ENCODE measurements at regions of chr12 and their contacts with region 1.

Region 1: GRCh38 chr12:57865090-57865751 is 18.7 kb upstream of the CTDSP2 start:
- DNase-seq: peak; percentile 77
- ATAC-seq: peak; percentile 90
- H3K4me3 ChIP-seq: peak overlapping the region; percentile 41
- H3K27ac ChIP-seq: peak overlapping the region; percentile 98
- H3K4me1 ChIP-seq: peaks cover 27% of the 10 kb centered on the region
- H3K27me3 ChIP-seq: no peaks in the 10 kb centered on the region
- CTCF ChIP-seq: no peak
- POLR2A ChIP-seq: no peak
- RAD21 ChIP-seq: no peak

Region 2: DNA sequence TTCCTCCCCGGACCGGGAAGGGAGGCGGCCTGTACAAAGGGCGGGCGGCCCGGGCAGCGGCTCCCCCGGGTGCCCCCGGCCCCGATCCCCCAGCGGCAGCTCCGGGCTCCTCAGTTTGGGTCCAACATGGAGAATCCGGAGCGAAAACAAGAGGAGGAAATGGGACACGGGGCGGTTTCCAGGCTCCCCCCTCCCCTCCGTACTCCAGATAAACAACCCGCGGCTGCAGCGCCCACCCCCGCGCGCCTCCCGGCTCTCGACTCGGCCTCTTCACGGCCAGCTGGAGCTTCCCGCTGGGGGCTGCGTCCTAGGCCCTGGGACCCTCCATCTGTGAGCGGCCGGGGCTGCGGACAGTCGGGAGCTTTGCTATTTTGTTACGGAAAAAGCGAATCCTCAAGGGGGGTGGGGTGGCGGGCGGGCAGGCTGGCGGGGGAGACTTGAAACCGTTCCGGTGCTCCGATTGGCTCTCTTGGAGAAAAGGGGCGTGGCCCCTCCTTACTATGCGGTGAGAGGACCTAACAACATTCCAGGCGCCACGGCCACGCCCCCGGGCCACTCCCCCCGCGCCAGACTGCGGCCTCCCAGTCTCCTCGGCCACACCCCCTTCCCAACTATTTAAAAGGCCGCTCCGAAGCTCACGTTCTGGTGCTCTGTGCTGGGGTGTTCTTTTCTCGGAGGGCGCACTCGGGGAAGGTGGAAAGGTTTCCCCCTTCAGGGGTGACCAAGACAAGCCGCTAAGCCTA is 18.5 kb before region 1 on chr12 and contains the start of gene CTDSP2:
- CTCF ChIA-PET with region 1: interaction called, 4 read pairs
- POLR2A ChIA-PET with region 1: interaction called, 12 read pairs
- dilution Hi-C with region 1: no loop called
- in situ Hi-C with region 1: no loop called
- intact Hi-C with region 1: loop called (anchors 2 kb)
- DNase-seq: peak; percentile 98
- ATAC-seq: peak; percentile 81
- H3K4me3 ChIP-seq: peak within 1 kb of the TSS; percentile 99
- H3K27ac ChIP-seq: peak within 1 kb of the TSS; percentile 99
- H3K4me1 ChIP-seq: peaks cover 16% of the 10 kb centered on the region
- H3K27me3 ChIP-seq: no peaks in the 10 kb centered on the region; the same call in 1 of the 2 replicates
- CTCF ChIP-seq: no peak
- POLR2A ChIP-seq: peak; percentile 62; the same call in 1 of the 2 replicates
- RAD21 ChIP-seq: no peak
- total RNA-seq, gene CTDSP2: 79.4 and 114 TPM in 2 replicates

Region 3: GRCh38 chr12:57888409-57889157 is 23.4 kb after region 1 on chr12:
- CTCF ChIA-PET with region 1: interaction called, 3 read pairs
- POLR2A ChIA-PET with region 1: interaction called, 7 read pairs
- dilution Hi-C with region 1: no loop called
- in situ Hi-C with region 1: no loop called
- intact Hi-C with region 1: loop called (anchors 2 kb)
- DNase-seq: peak; percentile 76
- ATAC-seq: peak; percentile 33
- H3K4me3 ChIP-seq: peak overlapping the region; percentile 1; the same call in 1 of the 2 replicates
- H3K27ac ChIP-seq: peak overlapping the region; percentile 90
- H3K4me1 ChIP-seq: peaks cover 41% of the 10 kb centered on the region
- H3K27me3 ChIP-seq: no peaks in the 10 kb centered on the region
- CTCF ChIP-seq: no peak
- POLR2A ChIP-seq: peak; percentile 37; the same call in 1 of the 2 replicates
- RAD21 ChIP-seq: no peak

Region 4: GRCh38 chr12:57899010-57899662 is 33.9 kb after region 1 on chr12:
- CTCF ChIA-PET with region 1: interaction called, 14 read pairs
- POLR2A ChIA-PET with region 1: interaction called, 24 read pairs
- dilution Hi-C with region 1: no loop called
- in situ Hi-C with region 1: no loop called
- intact Hi-C with region 1: loop called (anchors 1 kb)
- DNase-seq: peak; percentile 81
- ATAC-seq: peak; percentile 30
- H3K4me3 ChIP-seq: no peak overlapping the region
- H3K27ac ChIP-seq: peak overlapping the region; percentile 97
- H3K4me1 ChIP-seq: peaks cover 47% of the 10 kb centered on the region
- H3K27me3 ChIP-seq: no peaks in the 10 kb centered on the region
- CTCF ChIP-seq: no peak
- POLR2A ChIP-seq: no peak
- RAD21 ChIP-seq: peak; percentile 6; the same call in 1 of the 2 replicates